Mammary epithelial cell (primary cell): ENCODE measurements at regions of chr15 and their contacts with region 1.

Region 1: GRCh38 chr15:34367101-34368081 is at the start of gene LPCAT4:
- DNase-seq: peak; percentile 87
- H3K4me3 ChIP-seq: peak within 1 kb of the TSS; percentile 68 to 89 (median 77)
- H3K27ac ChIP-seq: peak within 1 kb of the TSS; percentile 46
- H3K4me1 ChIP-seq: peaks cover 25% of the 10 kb centered on the region
- H3K27me3 ChIP-seq: no peaks in the 10 kb centered on the region
- CTCF ChIP-seq: peak; percentile 70 to 96
- total RNA-seq, gene LPCAT4: 9.5 to 74.6 TPM

Region 2: GRCh38 chr15:34056936-34057335 is 310.5 kb before region 1 on chr15:
- CTCF ChIA-PET with region 1: no interaction called
- dilution Hi-C with region 1: no loop called
- in situ Hi-C with region 1: no loop called
- intact Hi-C with region 1: loop called (anchors 1 kb)
- DNase-seq: no peak
- H3K4me3 ChIP-seq: no peak overlapping the region
- H3K27ac ChIP-seq: no peak overlapping the region
- H3K4me1 ChIP-seq: peaks cover 9% of the 10 kb centered on the region
- H3K27me3 ChIP-seq: no peaks in the 10 kb centered on the region
- CTCF ChIP-seq: no peak

Region 3: GRCh38 chr15:34109797-34110663 is 257.4 kb before region 1 on chr15:
- CTCF ChIA-PET with region 1: interaction called, 4 read pairs
- dilution Hi-C with region 1: no loop called
- in situ Hi-C with region 1: loop called in 1 of 2 experiments (anchors 25 kb)
- intact Hi-C with region 1: loop called (anchors 1 kb)
- DNase-seq: peak; percentile 21
- H3K4me3 ChIP-seq: no peak overlapping the region
- H3K27ac ChIP-seq: no peak overlapping the region
- H3K4me1 ChIP-seq: no peaks in the 10 kb centered on the region
- H3K27me3 ChIP-seq: no peaks in the 10 kb centered on the region
- CTCF ChIP-seq: peak; percentile 58 to 77

Region 4: DNA sequence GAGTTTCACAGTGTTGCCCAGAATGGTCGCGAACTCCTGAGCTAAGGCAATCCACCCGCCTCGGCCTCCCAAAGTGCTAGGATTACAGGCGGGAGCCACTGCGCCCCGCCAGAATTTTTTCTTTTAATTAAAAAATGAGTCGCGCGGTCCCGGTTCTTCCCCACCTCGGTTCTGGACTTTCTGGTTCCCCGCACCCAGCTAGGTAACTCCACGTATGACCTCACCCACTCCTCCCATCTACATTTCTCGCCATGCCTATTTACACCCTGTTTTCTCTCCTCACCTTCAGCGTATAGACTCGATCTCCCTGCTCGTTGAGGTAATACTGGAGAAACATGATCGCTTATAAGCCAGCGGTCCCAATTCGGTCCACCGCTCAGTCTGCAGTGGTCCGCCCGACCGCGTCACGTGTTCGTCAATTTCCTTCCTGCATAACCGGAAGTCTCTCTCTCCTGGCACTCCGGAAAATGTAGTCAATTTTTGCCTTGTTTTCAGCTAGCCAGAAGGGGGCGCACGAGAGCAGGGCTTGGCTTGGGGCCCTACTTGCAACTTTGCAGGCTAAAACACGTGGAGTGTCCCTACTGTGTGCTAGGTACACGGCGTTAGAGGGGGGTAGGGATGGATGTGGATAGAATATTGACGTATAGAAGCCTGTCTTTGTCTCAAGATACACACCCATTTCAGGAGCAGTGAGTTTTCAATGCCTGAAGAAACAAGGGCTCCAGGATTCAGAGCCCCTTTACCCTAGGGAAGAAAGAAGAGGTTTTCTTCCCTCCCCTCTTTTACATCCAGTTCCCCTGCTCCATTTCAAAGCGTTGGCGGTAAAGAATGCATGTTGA is 24.4 kb before region 1 on chr15 and contains the starts of genes NOP10 and NUTM1:
- CTCF ChIA-PET with region 1: no interaction called
- dilution Hi-C with region 1: no loop called
- in situ Hi-C with region 1: no loop called
- intact Hi-C with region 1: loop called (anchors 1 kb)
- DNase-seq: peak; percentile 87
- H3K4me3 ChIP-seq: peak within 1 kb of the TSS; percentile 91 to 95 (median 94)
- H3K27ac ChIP-seq: peak within 1 kb of the TSS; percentile 87
- H3K4me1 ChIP-seq: peaks cover 3% of the 10 kb centered on the region
- H3K27me3 ChIP-seq: no peaks in the 10 kb centered on the region
- CTCF ChIP-seq: peak; percentile 95 to 96
- total RNA-seq, gene NOP10: 187 to 239 TPM
- total RNA-seq, gene NUTM1: not detected

Region 5: GRCh38 chr15:34587717-34588674 is 220.6 kb after region 1 on chr15:
- CTCF ChIA-PET with region 1: no interaction called
- dilution Hi-C with region 1: no loop called
- in situ Hi-C with region 1: no loop called
- intact Hi-C with region 1: loop called (anchors 1 kb)
- DNase-seq: peak; percentile 78
- H3K4me3 ChIP-seq: peak overlapping the region; percentile 5 to 60 (median 29)
- H3K27ac ChIP-seq: peak overlapping the region; percentile 22
- H3K4me1 ChIP-seq: peaks cover 8% of the 10 kb centered on the region
- H3K27me3 ChIP-seq: no peaks in the 10 kb centered on the region
- CTCF ChIP-seq: peak; percentile 71 to 75